Activated CD4-positive, alpha-beta memory T cell treated with anti-CD3 and anti-CD28 coated beads, Interleukin-2, amount 10 ng/mL, durations not matched to agents 7 days and 5 days (primary cell): ENCODE measurements at regions of chr19 and their contacts with region 1.

Region 1: GRCh38 chr19:12789904-12790619 is 1.2 kb upstream of the JUNB start:
- DNase-seq: peak; percentile 98
- H3K4me3 Mint-ChIP-seq: peak overlapping the region; percentile 93
- H3K27ac Mint-ChIP-seq: peak overlapping the region; percentile 98
- H3K4me1 Mint-ChIP-seq: peaks cover 45% of the 10 kb centered on the region
- H3K27me3 Mint-ChIP-seq: no peaks in the 10 kb centered on the region

Region 2: GRCh38 chr19:12722566-12723380 is 67.3 kb before region 1 on chr19:
- CTCF ChIA-PET with region 1: interaction called, 7 read pairs
- POLR2A ChIA-PET with region 1: interaction called, 45 read pairs
- DNase-seq: peak; percentile 95
- H3K4me3 Mint-ChIP-seq: peak overlapping the region; percentile 92
- H3K27ac Mint-ChIP-seq: peak overlapping the region; percentile 85
- H3K4me1 Mint-ChIP-seq: peaks cover 41% of the 10 kb centered on the region
- H3K27me3 Mint-ChIP-seq: no peaks in the 10 kb centered on the region

Region 3: DNA sequence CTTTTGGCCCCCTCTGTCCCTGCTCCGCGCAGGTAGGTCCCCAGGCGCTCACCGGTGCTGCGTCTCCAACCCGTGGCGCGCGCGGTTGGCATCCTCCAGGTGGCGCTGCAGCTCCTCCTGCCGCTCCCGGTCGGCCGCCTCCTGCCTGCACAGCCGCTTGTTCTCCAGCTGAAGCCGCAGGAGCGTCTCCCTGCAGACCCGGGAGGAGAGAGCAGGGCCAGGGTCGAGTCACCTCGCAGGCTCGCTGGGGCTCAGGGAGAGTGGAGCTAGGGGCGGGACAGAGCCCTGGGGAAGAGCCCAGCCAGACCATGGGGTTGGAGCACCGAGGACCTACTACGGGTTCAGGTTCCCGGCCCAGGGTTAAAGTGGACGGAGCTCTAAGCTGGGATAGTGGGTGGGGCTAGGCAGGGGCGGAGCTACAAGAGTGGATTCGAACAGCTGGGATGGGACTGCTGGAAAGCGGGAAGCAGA is 24.0 kb before region 1 on chr19:
- CTCF ChIA-PET with region 1: interaction called, 419 read pairs
- POLR2A ChIA-PET with region 1: interaction called, 574 read pairs
- DNase-seq: peak; percentile 86
- H3K4me3 Mint-ChIP-seq: peak overlapping the region; percentile 24
- H3K27ac Mint-ChIP-seq: no peak overlapping the region
- H3K4me1 Mint-ChIP-seq: peaks cover 16% of the 10 kb centered on the region
- H3K27me3 Mint-ChIP-seq: no peaks in the 10 kb centered on the region

Region 4: GRCh38 chr19:12806239-12807081 is 16.4 kb after region 1 on chr19 and contains the start of gene RNASEH2A:
- CTCF ChIA-PET with region 1: interaction called, 6 read pairs
- POLR2A ChIA-PET with region 1: interaction called, 59 read pairs
- DNase-seq: peak; percentile 92
- H3K4me3 Mint-ChIP-seq: peak within 1 kb of the TSS; percentile 95
- H3K27ac Mint-ChIP-seq: peak within 1 kb of the TSS; percentile 83
- H3K4me1 Mint-ChIP-seq: peaks cover 32% of the 10 kb centered on the region
- H3K27me3 Mint-ChIP-seq: no peaks in the 10 kb centered on the region
- total RNA-seq, gene RNASEH2A: 34.8 to 38.4 TPM

Region 5: DNA sequence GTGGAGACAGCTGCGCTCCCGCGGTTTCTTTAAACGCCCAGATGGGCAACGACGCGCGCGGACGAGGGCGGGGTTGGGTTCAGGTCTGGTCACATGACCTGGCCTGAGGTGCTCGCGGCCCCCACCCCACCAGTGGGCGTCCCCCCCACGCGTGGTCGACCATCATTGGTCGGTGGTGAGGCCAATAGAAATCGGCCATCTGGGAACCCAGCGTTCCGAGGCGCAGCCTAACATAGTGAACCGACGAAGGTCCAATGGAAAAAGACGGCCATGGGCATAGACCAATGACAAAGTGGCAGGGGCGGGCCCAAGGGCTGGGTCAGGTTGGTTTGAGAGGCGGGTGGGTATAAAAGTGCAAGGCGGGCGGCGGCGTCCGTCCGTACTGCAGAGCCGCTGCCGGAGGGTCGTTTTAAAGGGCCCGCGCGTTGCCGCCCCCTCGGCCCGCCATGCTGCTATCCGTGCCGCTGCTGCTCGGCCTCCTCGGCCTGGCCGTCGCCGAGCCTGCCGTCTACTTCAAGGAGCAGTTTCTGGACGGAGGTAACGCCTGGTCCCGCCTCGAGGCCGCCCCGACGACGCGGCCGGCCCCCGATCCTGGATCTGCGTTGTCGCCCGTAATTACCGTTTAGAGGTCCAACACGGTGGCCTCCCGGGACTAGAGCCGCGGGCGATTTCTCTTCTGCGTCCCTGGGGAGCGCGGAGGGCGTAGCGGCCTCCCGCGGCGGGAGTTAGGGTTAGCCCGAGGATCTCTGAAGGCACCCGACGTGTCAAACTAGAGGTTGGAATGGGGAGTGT is 148.4 kb after region 1 on chr19 and contains the start of gene CALR:
- CTCF ChIA-PET with region 1: no interaction called
- POLR2A ChIA-PET with region 1: interaction called, 16 read pairs
- DNase-seq: peak; percentile 99
- H3K4me3 Mint-ChIP-seq: peak within 1 kb of the TSS; percentile 99
- H3K27ac Mint-ChIP-seq: peak within 1 kb of the TSS; percentile 92
- H3K4me1 Mint-ChIP-seq: peaks cover 61% of the 10 kb centered on the region
- H3K27me3 Mint-ChIP-seq: no peaks in the 10 kb centered on the region
- total RNA-seq, gene CALR: 640 to 660 TPM

Region 6: DNA sequence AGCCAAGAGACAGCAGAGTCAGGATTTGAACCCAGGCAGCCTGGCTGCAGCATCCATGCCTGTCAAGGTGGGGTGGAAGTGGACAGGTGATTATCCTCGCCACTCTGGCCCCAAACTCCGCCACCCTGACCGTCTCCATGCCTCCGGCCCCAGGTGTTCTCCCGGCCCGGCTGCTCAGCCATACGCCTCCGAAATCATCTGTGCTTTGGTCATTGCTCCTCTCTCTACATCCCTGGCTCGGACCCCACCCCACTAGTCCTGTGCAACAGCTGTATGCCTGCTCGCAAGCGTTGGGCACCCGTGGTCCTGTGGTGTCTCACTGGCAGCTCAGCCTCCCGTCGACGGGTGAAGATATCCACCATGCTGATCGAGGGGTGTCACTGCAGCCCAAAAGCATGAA is 183.2 kb after region 1 on chr19:
- CTCF ChIA-PET with region 1: no interaction called
- POLR2A ChIA-PET with region 1: no interaction called
- DNase-seq: no peak
- H3K4me3 Mint-ChIP-seq: no peak overlapping the region
- H3K27ac Mint-ChIP-seq: no peak overlapping the region
- H3K4me1 Mint-ChIP-seq: no peaks in the 10 kb centered on the region
- H3K27me3 Mint-ChIP-seq: peaks cover 5% of the 10 kb centered on the region